ENCODE measurements at regions of chr10 and their contacts with region 1.

Region 1: GRCh38 chr10:100286051-100287033 is at the start of gene BLOC1S2:
- DNase-seq: peak; percentile 91
- H3K4me3 Mint-ChIP-seq: peak within 1 kb of the TSS; percentile 99
- H3K27ac Mint-ChIP-seq: peak within 1 kb of the TSS; percentile 99
- H3K4me1 Mint-ChIP-seq: peaks cover 28% of the 10 kb centered on the region
- H3K27me3 Mint-ChIP-seq: peaks cover 3% of the 10 kb centered on the region
- total RNA-seq, gene BLOC1S2: 65.7 and 66.5 TPM in 2 replicates

Region 2: GRCh38 chr10:99732033-99732912 is 554.1 kb before region 1 on chr10 and contains the starts of genes COX15 and CUTC:
- intact Hi-C with region 1: loop called (anchors 10 kb)
- DNase-seq: peak; percentile 94
- H3K4me3 Mint-ChIP-seq: peak within 1 kb of the TSS; percentile 98
- H3K27ac Mint-ChIP-seq: peak within 1 kb of the TSS; percentile 99
- H3K4me1 Mint-ChIP-seq: peaks cover 41% of the 10 kb centered on the region
- H3K27me3 Mint-ChIP-seq: no peaks in the 10 kb centered on the region
- total RNA-seq, gene COX15: 36.7 and 38.1 TPM in 2 replicates
- total RNA-seq, gene CUTC: 42.2 and 45.4 TPM in 2 replicates

Region 3: DNA sequence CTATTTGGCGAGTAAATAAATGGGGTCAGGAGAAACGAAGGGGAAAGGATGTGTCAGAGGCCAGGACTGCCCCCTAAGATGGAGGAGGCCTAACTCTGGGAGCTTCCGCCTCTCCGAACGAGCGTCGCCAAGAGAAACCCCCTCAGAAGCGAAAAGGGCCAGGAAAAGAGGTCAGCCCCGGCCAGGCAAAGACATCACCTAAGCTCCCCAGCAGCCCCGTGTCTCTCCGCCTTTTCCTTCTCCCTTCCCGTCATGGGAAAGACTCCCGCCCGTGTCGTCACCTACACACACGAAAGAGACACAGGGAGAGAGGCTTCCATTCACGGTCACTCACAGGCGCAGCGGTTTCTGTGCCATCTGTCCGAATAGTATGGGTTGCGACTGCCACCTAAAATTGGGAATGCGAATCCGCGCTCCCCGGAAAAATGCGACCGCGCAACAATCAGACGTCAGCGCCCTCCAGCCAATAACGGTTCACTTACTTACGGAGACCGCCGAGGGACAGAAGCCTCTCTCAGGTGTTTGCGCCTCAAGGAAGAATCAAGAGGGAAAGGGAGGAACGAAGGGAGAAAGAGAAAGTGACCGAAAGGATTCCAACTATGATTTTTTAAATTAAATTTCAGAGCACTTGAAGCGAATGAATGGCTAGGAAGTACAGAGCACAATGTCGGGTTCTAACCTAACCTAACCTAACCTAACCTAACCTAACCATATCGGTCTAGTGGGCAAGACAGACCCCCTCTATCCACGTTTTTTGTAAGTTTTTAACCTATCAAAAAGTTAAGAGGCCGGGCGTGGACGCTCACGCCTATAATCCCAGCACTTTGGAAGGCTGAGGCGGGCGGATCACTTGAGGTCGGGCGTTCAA is 18.9 kb before region 1 on chr10 and contains the start of gene CWF19L1:
- intact Hi-C with region 1: loop called (anchors 1 kb)
- DNase-seq: peak; percentile 72
- H3K4me3 Mint-ChIP-seq: peak within 1 kb of the TSS; percentile 99
- H3K27ac Mint-ChIP-seq: peak within 1 kb of the TSS; percentile 95
- H3K4me1 Mint-ChIP-seq: peaks cover 20% of the 10 kb centered on the region
- H3K27me3 Mint-ChIP-seq: no peaks in the 10 kb centered on the region
- total RNA-seq, gene CWF19L1: 37.3 and 42.6 TPM in 2 replicates

Region 4: DNA sequence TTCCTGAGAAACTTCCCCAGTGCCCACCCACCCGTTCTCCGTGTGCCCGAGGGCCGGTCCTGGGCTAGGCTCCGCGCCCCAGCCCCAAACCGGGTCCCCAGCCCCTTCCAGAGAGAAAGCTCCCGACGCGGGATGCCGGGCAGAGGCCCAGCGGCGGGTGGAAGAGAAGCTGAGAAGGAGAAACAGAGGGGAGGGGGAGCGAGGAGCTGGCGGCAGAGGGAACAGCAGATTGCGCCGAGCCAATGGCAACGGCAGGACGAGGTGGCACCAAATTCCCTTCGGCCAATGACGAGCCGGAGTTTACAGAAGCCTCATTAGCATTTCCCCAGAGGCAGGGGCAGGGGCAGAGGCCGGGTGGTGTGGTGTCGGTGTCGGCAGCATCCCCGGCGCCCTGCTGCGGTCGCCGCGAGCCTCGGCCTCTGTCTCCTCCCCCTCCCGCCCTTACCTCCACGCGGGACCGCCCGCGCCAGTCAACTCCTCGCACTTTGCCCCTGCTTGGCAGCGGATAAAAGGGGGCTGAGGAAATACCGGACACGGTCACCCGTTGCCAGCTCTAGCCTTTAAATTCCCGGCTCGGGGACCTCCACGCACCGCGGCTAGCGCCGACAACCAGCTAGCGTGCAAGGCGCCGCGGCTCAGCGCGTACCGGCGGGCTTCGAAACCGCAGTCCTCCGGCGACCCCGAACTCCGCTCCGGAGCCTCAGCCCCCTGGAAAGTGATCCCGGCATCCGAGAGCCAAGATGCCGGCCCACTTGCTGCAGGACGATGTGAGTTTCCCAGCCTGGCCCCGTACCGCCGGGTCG is 60.6 kb after region 1 on chr10 and contains the start of gene SCD:
- intact Hi-C with region 1: loop called (anchors 1 kb)
- DNase-seq: peak; percentile 88
- H3K4me3 Mint-ChIP-seq: peak within 1 kb of the TSS; percentile 100
- H3K27ac Mint-ChIP-seq: peak within 1 kb of the TSS; percentile 99
- H3K4me1 Mint-ChIP-seq: peaks cover 72% of the 10 kb centered on the region
- H3K27me3 Mint-ChIP-seq: no peaks in the 10 kb centered on the region
- total RNA-seq, gene SCD: 194 TPM in 2 replicates

Region 5: GRCh38 chr10:100529475-100530298 is 243.3 kb after region 1 on chr10 and contains the start of gene NDUFB8:
- intact Hi-C with region 1: loop called (anchors 2 kb)
- DNase-seq: peak; percentile 86
- H3K4me3 Mint-ChIP-seq: peak within 1 kb of the TSS; percentile 92
- H3K27ac Mint-ChIP-seq: peak within 1 kb of the TSS; percentile 97
- H3K4me1 Mint-ChIP-seq: peaks cover 54% of the 10 kb centered on the region
- H3K27me3 Mint-ChIP-seq: no peaks in the 10 kb centered on the region
- total RNA-seq, gene NDUFB8: 292 and 304 TPM in 2 replicates

Measured in activated T-helper 1 cell treated with anti-CD3 and anti-CD28 coated beads, Interleukin-12 subunit alpha, Interleukin-12 subunit beta, Interleukin-2, Interleukin-4 antibody, amounts not matched to agents 30 ng/mL and 10 ng/mL and 1 ng/mL, durations not matched to agents 14 hours and 24 hours and 36 hours (primary cell).